ENCODE measurements at regions of chr7 and their contacts with region 1.

Region 1: DNA sequence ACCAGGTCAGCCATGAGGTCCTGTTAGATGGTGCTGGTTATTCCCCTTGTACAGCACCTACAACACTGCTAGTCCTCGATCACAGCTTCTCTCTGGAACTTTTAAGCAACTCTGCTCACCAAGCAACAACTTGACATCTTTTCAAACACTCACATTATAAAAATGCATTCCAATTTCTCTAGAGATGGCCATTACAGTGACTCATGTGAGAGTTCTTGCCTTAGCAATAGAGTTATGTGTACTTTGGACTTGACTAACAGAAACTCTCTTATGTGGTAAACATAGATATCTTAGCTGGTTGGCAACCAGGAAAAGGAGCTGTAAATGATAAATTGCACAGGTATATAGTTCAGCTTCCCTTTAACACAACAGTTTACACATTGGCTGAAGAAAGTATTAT is 122.2 kb downstream of the PDE1C start:
- DNase-seq: no peak
- ATAC-seq: no peak
- H3K4me3 Mint-ChIP-seq: no peak overlapping the region
- H3K27ac Mint-ChIP-seq: no peak overlapping the region
- H3K4me1 Mint-ChIP-seq: no peaks in the 10 kb centered on the region
- H3K27me3 Mint-ChIP-seq: no peaks in the 10 kb centered on the region

Region 2: GRCh38 chr7:31896925-31897324 is 51.1 kb before region 1 on chr7:
- CTCF ChIA-PET with region 1: no interaction called
- POLR2A ChIA-PET with region 1: no interaction called
- intact Hi-C with region 1: loop called in 1 of 2 experiments (anchors 5 kb)
- DNase-seq: no peak
- ATAC-seq: no peak
- H3K4me3 Mint-ChIP-seq: no peak overlapping the region
- H3K27ac Mint-ChIP-seq: no peak overlapping the region
- H3K4me1 Mint-ChIP-seq: no peaks in the 10 kb centered on the region
- H3K27me3 Mint-ChIP-seq: no peaks in the 10 kb centered on the region

Region 3: GRCh38 chr7:31986944-31987430 is 39.0 kb after region 1 on chr7:
- CTCF ChIA-PET with region 1: no interaction called
- POLR2A ChIA-PET with region 1: no interaction called
- intact Hi-C with region 1: no loop called
- DNase-seq: no peak
- ATAC-seq: no peak
- H3K4me3 Mint-ChIP-seq: no peak overlapping the region
- H3K27ac Mint-ChIP-seq: no peak overlapping the region
- H3K4me1 Mint-ChIP-seq: no peaks in the 10 kb centered on the region
- H3K27me3 Mint-ChIP-seq: no peaks in the 10 kb centered on the region

Region 4: GRCh38 chr7:32036557-32036956 is 88.5 kb after region 1 on chr7:
- CTCF ChIA-PET with region 1: no interaction called
- POLR2A ChIA-PET with region 1: no interaction called
- intact Hi-C with region 1: no loop called
- DNase-seq: no peak
- ATAC-seq: no peak
- H3K4me3 Mint-ChIP-seq: no peak overlapping the region
- H3K27ac Mint-ChIP-seq: no peak overlapping the region
- H3K4me1 Mint-ChIP-seq: no peaks in the 10 kb centered on the region
- H3K27me3 Mint-ChIP-seq: peaks cover 2% of the 10 kb centered on the region